Activated B cell treated with CpG ODN at 0.5 μM for 24 hours (primary cell): ENCODE measurements at regions of chr5 and their contacts with region 1.

Region 1: GRCh38 chr5:40502736-40503135 is 177.0 kb upstream of the PTGER4 start:
- DNase-seq: no peak
- ATAC-seq: peak; percentile 84
- H3K4me3 Mint-ChIP-seq: no peak overlapping the region
- H3K27ac Mint-ChIP-seq: no peak overlapping the region
- H3K4me1 Mint-ChIP-seq: peaks cover 9% of the 10 kb centered on the region
- H3K27me3 Mint-ChIP-seq: no peaks in the 10 kb centered on the region
- CTCF ChIP-seq: no peak

Region 2: GRCh38 chr5:40191150-40191549 is 311.6 kb before region 1 on chr5:
- CTCF ChIA-PET with region 1: no interaction called
- POLR2A ChIA-PET with region 1: no interaction called
- intact Hi-C with region 1: no loop called
- DNase-seq: no peak
- ATAC-seq: no peak
- H3K4me3 Mint-ChIP-seq: no peak overlapping the region
- H3K27ac Mint-ChIP-seq: no peak overlapping the region
- H3K4me1 Mint-ChIP-seq: no peaks in the 10 kb centered on the region
- H3K27me3 Mint-ChIP-seq: no peaks in the 10 kb centered on the region
- CTCF ChIP-seq: no peak

Region 3: DNA sequence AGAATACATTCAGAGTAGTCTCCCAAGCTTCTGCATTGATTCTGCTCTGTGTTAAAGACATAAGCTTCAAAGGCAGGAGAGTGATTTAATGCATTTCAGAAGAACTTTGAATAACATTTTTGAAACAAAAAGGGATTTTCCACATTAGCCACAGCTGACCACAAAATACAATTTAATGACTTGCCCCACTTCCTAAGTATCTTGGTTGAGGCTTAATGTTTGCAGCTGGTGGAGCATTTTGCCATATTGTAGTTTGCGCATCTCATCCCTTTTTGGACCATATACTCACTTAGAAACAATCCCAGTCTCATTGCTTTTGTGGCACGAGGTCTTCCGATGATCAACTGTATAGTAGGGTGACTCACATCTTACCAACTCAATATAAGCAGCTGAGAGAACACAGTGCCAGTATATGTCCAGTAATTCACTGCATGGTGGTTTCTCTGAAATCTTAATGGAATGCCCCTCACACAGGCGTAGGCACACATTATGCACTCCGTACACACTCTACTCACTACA is 278.8 kb before region 1 on chr5:
- CTCF ChIA-PET with region 1: no interaction called
- POLR2A ChIA-PET with region 1: interaction called, 4 read pairs
- intact Hi-C with region 1: loop called (anchors 5 kb)
- DNase-seq: no peak
- ATAC-seq: peak; percentile 63
- H3K4me3 Mint-ChIP-seq: peak overlapping the region; percentile 21
- H3K27ac Mint-ChIP-seq: peak overlapping the region; percentile 79
- H3K4me1 Mint-ChIP-seq: peaks cover 45% of the 10 kb centered on the region
- H3K27me3 Mint-ChIP-seq: peaks cover 5% of the 10 kb centered on the region
- CTCF ChIP-seq: no peak

Region 4: DNA sequence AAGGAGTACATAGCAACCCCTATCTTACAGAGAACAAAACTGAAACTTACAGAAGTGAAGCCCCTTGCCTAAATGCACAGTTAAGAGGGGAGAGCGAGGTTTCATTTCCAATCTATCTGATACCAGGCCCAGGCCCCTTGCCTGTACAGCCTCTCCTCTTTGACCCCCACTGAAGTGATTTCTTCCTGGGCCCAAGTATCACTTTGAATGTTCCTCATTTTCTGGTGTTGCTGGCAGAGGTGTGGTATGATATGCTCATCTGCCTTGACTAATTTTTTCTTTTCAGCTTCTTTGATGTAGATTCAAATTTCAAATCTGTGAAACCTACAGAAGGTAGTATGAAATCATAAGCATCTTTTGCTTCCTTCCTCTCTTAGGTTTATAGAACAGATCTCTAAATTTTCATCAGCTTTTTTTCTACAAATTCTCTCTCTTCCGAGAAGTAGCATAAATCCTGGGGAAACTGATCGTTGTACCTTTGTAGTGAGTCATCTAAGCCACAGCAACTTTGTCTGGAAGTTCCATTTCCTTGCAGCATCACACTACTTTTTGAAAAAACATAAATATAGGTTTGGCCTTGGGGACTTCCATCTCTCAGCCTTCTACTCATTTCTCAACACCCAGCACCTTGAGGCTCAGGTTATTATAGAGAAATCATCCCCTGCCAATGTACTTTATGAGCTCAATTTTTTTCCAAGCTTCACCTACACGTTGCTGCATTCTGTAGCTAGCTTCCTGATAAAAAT is 225.4 kb before region 1 on chr5:
- CTCF ChIA-PET with region 1: no interaction called
- POLR2A ChIA-PET with region 1: no interaction called
- intact Hi-C with region 1: loop called (anchors 1 kb)
- DNase-seq: no peak
- ATAC-seq: peak; percentile 90
- H3K4me3 Mint-ChIP-seq: peak overlapping the region; percentile 30
- H3K27ac Mint-ChIP-seq: peak overlapping the region; percentile 77
- H3K4me1 Mint-ChIP-seq: peaks cover 30% of the 10 kb centered on the region
- H3K27me3 Mint-ChIP-seq: no peaks in the 10 kb centered on the region
- CTCF ChIP-seq: no peak

Region 5: GRCh38 chr5:40347981-40348725 is 154.6 kb before region 1 on chr5:
- CTCF ChIA-PET with region 1: no interaction called
- POLR2A ChIA-PET with region 1: no interaction called
- intact Hi-C with region 1: no loop called
- DNase-seq: no peak
- ATAC-seq: no peak
- H3K4me3 Mint-ChIP-seq: no peak overlapping the region
- H3K27ac Mint-ChIP-seq: no peak overlapping the region
- H3K4me1 Mint-ChIP-seq: no peaks in the 10 kb centered on the region
- H3K27me3 Mint-ChIP-seq: no peaks in the 10 kb centered on the region
- CTCF ChIP-seq: no peak

Region 6: DNA sequence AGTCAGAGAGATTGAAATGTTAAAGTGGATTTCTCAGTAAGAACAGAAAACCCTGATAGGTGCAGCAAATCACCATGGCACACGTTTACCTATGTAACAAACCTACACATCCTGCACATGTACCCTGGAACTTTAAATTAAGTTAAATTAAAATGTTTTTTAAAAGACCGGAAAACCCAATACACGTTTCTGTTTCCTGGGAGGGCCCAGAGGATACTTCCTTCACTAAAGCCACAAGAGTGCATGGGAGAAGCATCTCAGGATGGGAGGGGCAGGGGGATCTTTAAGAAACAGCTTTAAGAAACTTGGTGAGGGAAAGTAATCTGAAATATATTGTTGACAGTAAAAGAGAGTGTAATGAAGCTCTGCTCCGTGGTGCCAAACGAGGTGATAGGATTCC is 12.2 kb after region 1 on chr5:
- CTCF ChIA-PET with region 1: no interaction called
- POLR2A ChIA-PET with region 1: interaction called, 3 read pairs
- intact Hi-C with region 1: loop called (anchors 1 kb)
- DNase-seq: no peak
- ATAC-seq: no peak
- H3K4me3 Mint-ChIP-seq: no peak overlapping the region
- H3K27ac Mint-ChIP-seq: no peak overlapping the region
- H3K4me1 Mint-ChIP-seq: peaks cover 12% of the 10 kb centered on the region
- H3K27me3 Mint-ChIP-seq: no peaks in the 10 kb centered on the region
- CTCF ChIP-seq: no peak